GM10248 (cell line): ENCODE measurements at regions of chr2 and their contacts with region 1.

Region 1: GRCh38 chr2:70340921-70341765 is 39.3 kb upstream of the FAM136A start:
- DNase-seq: peak; percentile 60
- CTCF ChIP-seq: peak; percentile 71

Region 2: GRCh38 chr2:70321370-70321769 is 19.8 kb before region 1 on chr2:
- CTCF ChIA-PET with region 1: interaction called, 11 read pairs
- POLR2A ChIA-PET with region 1: no interaction called
- DNase-seq: no peak
- CTCF ChIP-seq: no peak

Region 3: GRCh38 chr2:70328921-70329561 is 12.1 kb before region 1 on chr2:
- CTCF ChIA-PET with region 1: interaction called, 29 read pairs
- POLR2A ChIA-PET with region 1: no interaction called
- DNase-seq: no peak
- CTCF ChIP-seq: no peak